Heart right ventricle (tissue), 16 donors: ENCODE measurements at regions of chr21 and their contacts with region 1.

Region 1: DNA sequence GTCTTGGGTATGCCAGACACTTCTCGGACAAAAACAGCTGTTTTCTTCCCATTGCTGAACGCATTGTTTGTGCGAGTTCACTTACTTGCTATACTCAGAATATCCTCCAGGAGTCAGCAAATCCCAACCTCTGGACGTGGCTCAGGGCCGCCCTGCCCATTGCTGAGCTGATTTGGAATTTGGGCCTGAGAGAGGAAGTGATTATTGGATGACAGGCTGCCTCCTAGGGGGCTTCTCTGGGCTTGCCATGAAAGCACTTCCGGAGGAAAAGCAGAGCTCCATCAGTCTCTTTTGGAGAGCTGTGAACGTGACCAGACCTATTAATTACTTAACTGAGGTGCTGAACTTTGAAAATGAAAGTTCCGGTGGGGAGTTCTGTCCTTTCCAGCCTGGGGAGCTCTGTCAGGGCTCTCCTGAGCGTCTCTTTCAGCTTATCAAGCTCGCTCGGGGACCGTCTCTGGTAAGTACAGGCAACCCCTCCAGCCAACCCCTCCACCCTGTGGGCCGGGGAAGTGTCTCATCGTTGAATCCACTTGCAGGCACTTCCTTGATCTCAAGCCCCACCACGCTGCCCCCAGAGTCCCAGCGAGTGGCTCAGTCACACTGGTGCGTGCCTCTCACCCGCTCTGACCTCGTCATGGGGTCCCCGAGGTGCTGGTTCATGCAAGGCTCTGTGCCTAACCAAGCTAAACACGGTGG is 76.9 kb downstream of the CLIC6 start:
- DNase-seq: peak; percentile 47 to 72
- ATAC-seq: peak; percentile 83 to 96 (median 92)
- H3K4me3 ChIP-seq: peak overlapping the region in 8 of 10 donors; percentile 8 to 47 (median 36)
- H3K27ac ChIP-seq: peak overlapping the region in 5 of 10 donors; percentile 16 to 54 (median 32)
- H3K4me1 ChIP-seq: peaks cover 0 to 12% (median 3%) of the 10 kb centered on the region in 9 donors
- H3K27me3 ChIP-seq: peaks cover 0 to 30% (median 14%) of the 10 kb centered on the region in 7 donors
- CTCF ChIP-seq: peak; percentile 65 to 88 (median 83)

Region 2: GRCh38 chr21:34693192-34693810 is 52.4 kb before region 1 on chr21:
- intact Hi-C with region 1: no loop called
- DNase-seq: peak in 1 of 2 donors; percentile 29
- ATAC-seq: peak in 1 of 8 donors; percentile 26
- H3K4me3 ChIP-seq: no peak overlapping the region
- H3K27ac ChIP-seq: no peak overlapping the region
- H3K4me1 ChIP-seq: peaks cover 0 to 17% (median 5%) of the 10 kb centered on the region in 9 donors
- H3K27me3 ChIP-seq: peaks cover 0 to 16% (median 0%) of the 10 kb centered on the region in 7 donors
- CTCF ChIP-seq: peak; percentile 56 to 85 (median 76)

Region 3: DNA sequence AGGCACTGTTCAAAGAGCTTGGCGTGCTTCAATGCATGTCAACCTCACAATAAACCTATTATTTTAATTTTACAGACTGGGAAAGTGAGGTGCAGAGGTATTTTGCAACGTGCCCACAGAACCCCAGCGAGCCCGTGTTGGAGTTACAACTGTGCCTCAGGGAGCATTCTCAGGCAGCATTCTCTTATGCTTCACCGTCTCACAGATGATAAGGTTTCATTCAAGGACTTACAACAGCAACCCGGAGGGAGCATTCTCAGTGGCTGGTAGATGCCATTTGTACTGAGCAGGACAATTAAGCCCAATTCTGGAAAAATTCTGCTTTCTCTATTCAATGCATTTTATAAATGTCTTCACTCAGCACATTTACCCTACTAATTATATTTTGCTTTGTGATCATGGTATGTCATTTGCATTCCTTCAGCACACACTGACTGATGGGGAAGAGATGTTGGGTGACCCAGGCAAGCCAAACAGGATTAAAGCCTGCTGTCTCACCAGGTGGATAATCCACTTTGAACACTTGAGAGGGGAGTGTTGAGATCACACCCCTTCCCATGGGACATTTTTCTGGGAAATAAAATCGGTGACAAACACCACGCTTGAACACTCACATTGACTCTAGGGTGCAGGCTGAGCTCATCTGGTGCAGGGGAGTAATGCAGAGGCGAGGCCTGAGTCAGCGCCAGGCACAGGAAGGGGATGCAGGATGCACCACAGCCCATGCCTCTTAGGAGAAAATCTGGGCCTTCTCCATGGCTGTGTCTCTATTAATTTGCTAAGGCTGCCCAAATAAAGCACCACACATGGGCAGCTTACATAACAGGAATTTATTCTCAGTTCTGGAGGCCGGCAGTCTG is 37.0 kb after region 1 on chr21:
- intact Hi-C with region 1: no loop called
- DNase-seq: no peak
- ATAC-seq: no peak
- H3K4me3 ChIP-seq: no peak overlapping the region
- H3K27ac ChIP-seq: no peak overlapping the region
- H3K4me1 ChIP-seq: no peaks in the 10 kb centered on the region
- H3K27me3 ChIP-seq: peaks cover 0 to 15% (median 0%) of the 10 kb centered on the region in 7 donors
- CTCF ChIP-seq: no peak

Region 4: DNA sequence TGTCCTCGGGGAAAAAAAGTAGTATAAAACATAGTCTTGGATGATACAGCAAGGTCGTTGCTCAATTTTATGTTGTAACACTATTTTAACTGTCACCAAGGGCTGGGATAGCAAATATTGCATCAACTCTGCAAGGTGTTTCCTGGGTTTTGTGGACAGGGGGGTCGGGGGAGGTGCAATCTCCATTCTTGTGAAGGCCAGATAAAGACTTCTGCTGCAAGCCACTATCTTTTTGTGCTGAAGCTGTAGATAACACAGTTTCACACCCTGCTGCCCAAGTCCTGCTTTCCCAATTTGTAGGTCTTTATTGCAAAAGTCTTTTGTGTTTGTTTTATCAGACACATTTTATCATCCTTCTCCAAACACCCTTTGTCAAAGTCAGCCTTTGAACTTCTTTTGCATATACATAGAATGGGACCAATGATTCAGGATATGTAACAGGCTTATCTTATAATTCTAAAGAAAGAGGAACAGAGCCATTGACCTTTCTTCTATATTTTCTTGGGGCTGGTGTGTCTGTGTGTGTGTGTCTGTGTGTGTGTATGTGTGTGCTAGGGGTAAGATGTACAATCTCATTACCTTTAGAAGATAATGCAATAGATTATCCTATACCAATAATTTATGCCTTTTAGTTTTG is 162.8 kb after region 1 on chr21:
- intact Hi-C with region 1: loop called in 1 of 10 experiments (anchors 10 kb)
- DNase-seq: no peak
- ATAC-seq: peak in 2 of 8 donors; percentile 49 to 51
- H3K4me3 ChIP-seq: no peak overlapping the region
- H3K27ac ChIP-seq: peak overlapping the region in 1 of 10 donors; percentile 20
- H3K4me1 ChIP-seq: peaks cover 0 to 62% (median 0%) of the 10 kb centered on the region in 9 donors
- H3K27me3 ChIP-seq: peaks cover 0 to 80% (median 19%) of the 10 kb centered on the region in 7 donors
- CTCF ChIP-seq: no peak

Region 5: GRCh38 chr21:35508139-35508888 is 762.6 kb after region 1 on chr21:
- intact Hi-C with region 1: loop called in 1 of 10 experiments (anchors 10 kb)
- DNase-seq: peak; percentile 50 to 54
- ATAC-seq: peak; percentile 67 to 86 (median 78)
- H3K4me3 ChIP-seq: no peak overlapping the region
- H3K27ac ChIP-seq: peak overlapping the region in 4 of 10 donors; percentile 15 to 85 (median 46)
- H3K4me1 ChIP-seq: peaks cover 0 to 52% (median 0%) of the 10 kb centered on the region in 9 donors
- H3K27me3 ChIP-seq: peaks cover 0 to 33% (median 17%) of the 10 kb centered on the region in 7 donors
- CTCF ChIP-seq: peak in 5 of 9 donors; percentile 32 to 55 (median 40)

Region 6: DNA sequence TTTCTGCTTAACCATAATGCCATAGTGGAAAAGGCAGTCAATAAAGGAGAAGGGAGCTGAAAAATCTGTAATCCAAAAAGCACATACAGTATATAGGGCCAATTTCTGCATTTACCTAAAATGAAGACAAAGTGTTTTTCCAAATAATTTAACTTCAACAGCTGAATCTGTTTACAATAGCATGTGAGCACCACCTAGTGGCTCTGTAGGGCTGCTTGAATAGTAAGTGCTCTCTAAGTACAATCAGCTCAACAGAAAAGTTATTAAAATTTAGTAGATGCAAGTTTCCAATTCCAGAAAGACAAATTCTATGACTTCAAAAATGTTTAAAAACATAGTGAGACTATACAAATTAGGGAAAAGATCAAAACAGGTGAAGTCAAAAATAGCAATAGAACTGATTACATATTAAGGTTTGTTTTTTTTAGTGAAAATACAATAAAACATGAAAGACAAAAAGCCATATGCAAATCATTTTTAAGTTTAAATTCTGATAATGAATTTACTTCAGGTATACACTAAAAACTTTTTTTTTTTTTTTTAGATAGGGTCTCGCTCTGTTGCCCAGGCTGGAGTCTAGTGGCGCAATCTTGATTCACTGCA is 1094.6 kb after region 1 on chr21:
- intact Hi-C with region 1: loop called (anchors 2 to 10 kb)
- DNase-seq: peak in 1 of 2 donors; percentile 67
- ATAC-seq: peak in 7 of 8 donors; percentile 42 to 81 (median 63)
- H3K4me3 ChIP-seq: no peak overlapping the region
- H3K27ac ChIP-seq: no peak overlapping the region
- H3K4me1 ChIP-seq: peaks cover 0 to 12% (median 2%) of the 10 kb centered on the region in 9 donors
- H3K27me3 ChIP-seq: peaks cover 0 to 5% (median 0%) of the 10 kb centered on the region in 7 donors
- CTCF ChIP-seq: peak; percentile 65 to 91 (median 83)

Region 7: GRCh38 chr21:36028127-36029069 is 1282.7 kb after region 1 on chr21:
- intact Hi-C with region 1: loop called in 9 of 10 experiments (anchors 5 to 10 kb)
- DNase-seq: peak; percentile 57 to 63
- ATAC-seq: peak; percentile 75 to 96 (median 88)
- H3K4me3 ChIP-seq: no peak overlapping the region
- H3K27ac ChIP-seq: no peak overlapping the region
- H3K4me1 ChIP-seq: peaks cover 0 to 8% (median 0%) of the 10 kb centered on the region in 9 donors
- H3K27me3 ChIP-seq: no peaks in the 10 kb centered on the region
- CTCF ChIP-seq: peak; percentile 91 to 97 (median 95)